ENCODE measurements at regions of chr10 and their contacts with region 1.

Region 1: DNA sequence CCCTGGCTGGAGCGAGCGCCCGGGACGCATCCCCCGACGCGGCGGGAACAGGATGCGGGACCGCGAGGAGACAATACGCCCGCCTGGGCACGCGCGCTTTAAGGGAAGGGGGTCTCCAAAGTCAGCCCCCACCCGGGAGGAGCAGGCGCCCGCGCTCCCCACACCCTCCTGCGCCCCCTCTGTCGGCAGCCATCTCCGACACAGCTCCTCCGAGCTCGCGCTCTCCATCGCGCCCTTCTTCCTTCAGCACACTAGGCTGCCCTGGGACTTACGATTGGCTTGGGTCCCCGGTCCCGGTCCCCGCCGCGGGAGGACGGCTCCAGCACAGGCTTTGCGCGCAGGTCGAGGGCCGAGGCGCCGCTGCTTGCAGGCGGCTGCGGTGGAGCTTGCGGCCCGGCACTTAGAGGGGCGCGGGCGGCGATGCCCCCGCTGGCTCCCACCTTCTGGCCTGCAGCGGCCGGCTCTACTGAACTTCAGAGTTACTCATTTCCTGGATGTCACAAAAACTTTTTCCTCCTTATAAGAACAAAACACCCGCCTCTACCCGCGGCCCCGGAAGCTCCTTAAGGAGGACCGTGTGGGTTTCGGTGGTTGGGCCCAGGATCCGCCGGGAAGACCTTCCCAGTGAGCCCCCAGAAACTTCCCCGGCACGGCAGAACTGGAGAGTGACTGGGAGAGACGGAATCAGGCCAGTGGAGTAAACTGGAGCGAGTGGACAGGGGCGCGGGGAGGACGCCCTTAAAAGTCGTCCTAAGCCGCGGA is at the start of gene ITPRIP:
- DNase-seq: peak; percentile 87
- H3K4me3 ChIP-seq: peak within 1 kb of the TSS; percentile 79
- H3K27ac ChIP-seq: peak within 1 kb of the TSS; percentile 84
- H3K4me1 ChIP-seq: peaks cover 60% of the 10 kb centered on the region
- CTCF ChIP-seq: peak; percentile 58
- total RNA-seq, gene ITPRIP: 3.3 and 6.0 TPM in 2 replicates

Region 2: DNA sequence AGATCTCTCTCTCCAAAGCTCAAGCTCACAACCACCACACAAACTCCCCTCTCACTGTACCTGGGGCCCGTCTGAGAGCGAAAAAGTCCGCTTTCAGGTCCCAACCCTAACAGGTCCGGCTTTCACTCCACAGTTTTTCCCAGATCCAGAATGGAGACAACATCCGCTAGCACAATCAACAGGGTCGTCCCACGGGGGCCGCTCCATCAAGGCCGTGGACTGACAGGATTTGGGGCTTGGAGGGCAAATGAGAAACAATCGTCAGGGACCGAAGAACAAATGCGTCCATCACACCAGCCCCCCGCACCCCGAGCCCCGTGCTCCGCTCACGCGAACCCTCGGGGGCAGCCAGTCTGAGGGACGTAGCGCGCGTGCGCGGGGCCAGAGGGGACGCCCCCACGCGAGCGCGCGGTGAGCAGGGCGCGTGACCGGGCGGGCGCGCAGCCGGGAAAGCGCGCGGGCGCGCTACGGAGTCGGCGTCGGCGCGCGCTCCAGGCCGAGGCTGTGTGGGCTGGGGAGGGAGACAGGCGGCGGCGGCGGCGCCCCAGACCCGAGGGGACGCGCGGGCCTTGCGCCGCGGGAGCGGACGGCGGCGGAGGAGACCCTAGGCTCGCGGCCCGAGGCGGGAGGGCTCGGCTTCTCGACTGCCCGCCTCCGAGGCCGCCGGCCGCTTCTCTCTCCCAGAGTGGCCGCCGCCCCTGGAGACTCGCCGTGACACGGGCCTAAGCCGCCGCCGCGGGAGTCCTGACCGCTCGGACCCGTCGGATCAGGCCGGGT is 371.3 kb before region 1 on chr10 and contains the start of gene SLK:
- CTCF ChIA-PET with region 1: no interaction called
- POLR2A ChIA-PET with region 1: interaction called, 3 read pairs
- intact Hi-C with region 1: loop called (anchors 5 kb)
- DNase-seq: peak; percentile 93
- H3K4me3 ChIP-seq: peak within 1 kb of the TSS; percentile 91
- H3K27ac ChIP-seq: peak within 1 kb of the TSS; percentile 49
- H3K4me1 ChIP-seq: peaks cover 30% of the 10 kb centered on the region
- CTCF ChIP-seq: no peak
- total RNA-seq, gene SLK: 19.0 and 19.9 TPM in 2 replicates

Region 3: DNA sequence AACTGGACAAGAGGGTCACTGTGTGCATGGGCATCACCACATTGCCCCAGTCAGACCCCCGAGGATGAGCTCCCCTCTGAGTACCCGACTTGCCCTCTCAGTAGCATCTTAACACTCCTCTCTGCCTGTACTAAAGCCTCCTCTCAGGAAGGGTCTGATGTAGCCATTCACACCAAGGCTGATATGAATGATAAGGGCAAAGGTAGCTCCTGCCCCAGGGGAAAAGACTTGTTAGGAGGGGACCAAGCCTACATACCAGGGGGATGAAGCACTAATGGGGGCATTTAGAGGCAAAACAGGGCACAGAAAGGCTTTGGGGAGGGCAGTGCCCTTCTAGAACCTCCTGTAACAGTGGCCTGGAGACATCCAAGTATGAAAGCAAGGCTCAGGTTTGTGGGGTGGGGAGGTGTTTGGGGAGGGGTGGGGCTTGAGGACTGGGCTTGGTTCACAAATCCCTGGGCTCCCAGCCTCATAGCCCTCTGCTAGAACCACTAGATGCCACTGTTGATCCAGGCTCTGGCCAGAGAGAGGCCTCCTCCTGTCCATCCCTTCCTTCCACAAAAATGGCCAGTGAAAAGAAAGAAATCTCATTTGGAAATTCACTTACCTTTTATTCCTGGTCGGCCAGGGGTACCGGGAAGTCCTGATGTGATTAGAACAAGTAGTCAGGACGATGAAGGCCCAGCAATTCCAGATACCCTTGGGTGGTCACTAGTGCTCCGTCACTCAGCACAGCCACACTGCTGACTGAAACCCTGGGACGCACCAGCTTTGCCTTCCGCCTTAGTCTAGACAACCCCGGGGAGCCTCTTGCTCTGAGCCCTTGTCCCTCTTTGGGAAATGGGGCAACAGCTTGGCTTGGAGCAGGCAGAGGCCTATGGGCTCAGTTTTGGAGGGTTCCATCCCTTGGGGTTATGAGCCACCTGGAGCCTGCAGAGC is 292.7 kb before region 1 on chr10:
- CTCF ChIA-PET with region 1: no interaction called
- POLR2A ChIA-PET with region 1: no interaction called
- intact Hi-C with region 1: no loop called
- DNase-seq: no peak
- H3K4me3 ChIP-seq: no peak overlapping the region
- H3K27ac ChIP-seq: no peak overlapping the region
- H3K4me1 ChIP-seq: no peaks in the 10 kb centered on the region
- CTCF ChIP-seq: 0 out of 2 replicates have a peak, but pooled peaks have one; percentile 36

Region 4: GRCh38 chr10:104268716-104269645 is 69.2 kb before region 1 on chr10 and contains the start of gene GSTO2:
- CTCF ChIA-PET with region 1: no interaction called
- POLR2A ChIA-PET with region 1: interaction called, 6 read pairs
- intact Hi-C with region 1: loop called (anchors 2 kb)
- DNase-seq: peak; percentile 99
- H3K4me3 ChIP-seq: peak within 1 kb of the TSS; percentile 88
- H3K27ac ChIP-seq: peak within 1 kb of the TSS; percentile 47
- H3K4me1 ChIP-seq: peaks cover 16% of the 10 kb centered on the region
- CTCF ChIP-seq: no peak
- total RNA-seq, gene GSTO2: 1.6 and 8.2 TPM in 2 replicates

Region 5: GRCh38 chr10:104306897-104307296 is 31.3 kb before region 1 on chr10:
- CTCF ChIA-PET with region 1: interaction called, 6 read pairs
- POLR2A ChIA-PET with region 1: interaction called, 6 read pairs
- intact Hi-C with region 1: loop called (anchors 1 kb)
- DNase-seq: no peak
- H3K4me3 ChIP-seq: no peak overlapping the region
- H3K27ac ChIP-seq: no peak overlapping the region
- H3K4me1 ChIP-seq: peaks cover 6% of the 10 kb centered on the region
- CTCF ChIP-seq: no peak

Region 6: DNA sequence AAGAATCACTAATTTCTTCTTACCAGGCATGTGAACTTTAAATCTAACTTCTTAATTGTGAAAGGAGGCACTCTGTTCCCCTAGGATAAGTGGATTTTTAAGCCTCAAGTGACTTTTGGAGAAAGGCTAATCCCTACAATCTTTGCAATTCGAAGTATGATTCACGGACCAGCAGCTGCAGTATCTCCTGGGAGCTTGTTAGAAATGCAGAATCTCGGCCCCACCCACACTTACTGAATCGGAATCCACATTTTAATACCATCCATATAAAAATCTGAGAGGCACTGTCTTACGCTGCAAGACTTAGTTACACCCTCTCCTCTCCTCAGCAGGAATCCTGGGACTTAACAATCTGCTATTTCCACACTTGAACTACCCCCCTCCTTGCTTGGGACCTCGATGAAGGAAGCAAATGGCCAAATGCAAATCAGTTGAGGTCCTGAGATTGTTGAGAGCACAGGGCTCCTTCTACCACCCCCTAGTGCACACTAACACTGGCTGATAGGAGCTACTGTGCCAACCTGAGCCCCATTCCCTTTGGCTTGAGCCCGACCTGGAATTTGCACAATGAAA is 20.9 kb before region 1 on chr10:
- CTCF ChIA-PET with region 1: interaction called, 8 read pairs
- POLR2A ChIA-PET with region 1: interaction called, 22 read pairs
- intact Hi-C with region 1: loop called (anchors 1 kb)
- DNase-seq: peak; percentile 35
- H3K4me3 ChIP-seq: peak overlapping the region; percentile 12
- H3K27ac ChIP-seq: peak overlapping the region; percentile 11
- H3K4me1 ChIP-seq: peaks cover 52% of the 10 kb centered on the region
- CTCF ChIP-seq: no peak; the same call in 1 of the 2 replicates

Region 7: DNA sequence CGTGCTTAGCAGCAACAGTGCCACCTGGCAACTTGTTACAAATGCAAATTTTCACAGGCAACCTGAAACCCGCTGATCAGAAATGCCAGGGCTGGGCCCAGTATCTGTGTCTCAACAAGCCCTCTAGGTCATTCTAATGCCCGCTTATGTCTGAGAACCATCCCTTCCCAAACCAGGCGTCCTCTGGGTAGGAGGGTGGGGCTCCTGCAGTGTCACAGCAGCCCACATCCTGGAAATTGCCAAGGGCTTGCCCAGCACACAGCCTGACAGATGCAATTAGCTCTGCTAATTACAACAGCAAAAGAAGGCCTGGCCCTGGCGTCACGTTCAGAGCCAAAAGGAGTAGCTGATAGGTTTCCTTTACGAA is 15.8 kb before region 1 on chr10:
- CTCF ChIA-PET with region 1: interaction called, 8 read pairs
- POLR2A ChIA-PET with region 1: interaction called, 22 read pairs
- intact Hi-C with region 1: loop called (anchors 1 kb)
- DNase-seq: peak; percentile 77
- H3K4me3 ChIP-seq: peak overlapping the region; percentile 19
- H3K27ac ChIP-seq: peak overlapping the region; percentile 70
- H3K4me1 ChIP-seq: peaks cover 73% of the 10 kb centered on the region
- CTCF ChIP-seq: no peak

Region 8: DNA sequence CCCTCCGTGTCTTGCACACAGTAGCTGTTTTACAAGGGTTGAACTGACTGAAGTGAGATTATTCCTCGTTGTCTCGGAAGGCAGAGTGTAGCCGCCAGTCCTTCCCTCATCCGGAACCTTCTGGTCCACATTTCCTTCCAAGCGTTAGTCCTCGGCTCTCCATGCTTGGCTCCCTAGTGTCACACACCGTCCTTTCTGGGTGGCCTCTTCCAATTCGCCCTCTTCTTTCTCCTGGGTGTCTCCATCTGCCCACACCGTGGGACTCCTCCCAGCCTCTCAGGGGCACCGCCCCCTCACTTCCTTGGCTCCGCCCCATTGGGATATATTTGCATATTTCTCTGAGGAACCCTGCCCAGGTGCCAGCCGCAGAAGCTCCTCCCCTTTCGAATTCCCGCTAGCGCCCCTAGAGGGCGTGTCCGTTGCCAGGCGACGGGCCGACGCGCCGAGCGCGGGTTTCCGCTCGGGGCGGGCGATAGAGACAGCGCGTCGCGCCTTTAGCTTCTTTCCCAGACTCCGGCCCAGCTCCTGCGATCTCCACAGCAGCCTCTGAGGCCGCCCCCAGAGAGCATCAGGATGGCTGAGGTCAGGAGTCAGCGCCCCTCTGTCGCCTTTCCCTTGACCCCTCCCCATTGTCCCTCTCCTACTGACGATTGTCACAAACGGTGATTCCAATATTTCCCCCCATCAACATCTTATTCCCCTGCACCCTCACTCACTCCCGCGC is 15.3 kb after region 1 on chr10 and contains the start of gene CFAP58:
- CTCF ChIA-PET with region 1: no interaction called
- POLR2A ChIA-PET with region 1: interaction called, 18 read pairs
- intact Hi-C with region 1: loop called (anchors 1 kb)
- DNase-seq: peak; percentile 87
- H3K4me3 ChIP-seq: peak within 1 kb of the TSS; percentile 68
- H3K27ac ChIP-seq: no peak within 1 kb of the TSS
- H3K4me1 ChIP-seq: peaks cover 33% of the 10 kb centered on the region
- CTCF ChIP-seq: peak; percentile 71
- total RNA-seq, gene CFAP58: 0.09 and 0.36 TPM in 2 replicates

Region 9: DNA sequence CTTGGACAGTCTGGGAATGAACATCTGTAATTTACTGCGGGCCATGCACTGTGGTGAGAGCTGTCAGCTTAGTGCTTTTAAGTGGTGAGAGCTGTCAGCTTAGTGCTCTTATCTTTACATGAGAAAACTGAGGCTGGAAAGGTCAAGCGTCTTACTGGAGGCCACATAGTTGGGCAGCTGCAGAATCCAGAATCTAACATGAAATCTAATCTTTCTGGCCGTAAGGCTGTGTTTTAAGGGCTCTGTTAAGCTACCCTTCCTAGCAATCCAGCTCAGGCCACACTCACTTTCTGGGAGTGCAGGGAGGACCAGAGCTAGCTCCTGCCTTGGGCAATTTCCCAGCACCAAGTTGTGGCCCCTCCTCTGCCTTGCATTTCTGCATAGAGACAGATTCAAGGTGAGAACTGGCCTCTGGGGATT is 373.2 kb after region 1 on chr10:
- CTCF ChIA-PET with region 1: no interaction called
- POLR2A ChIA-PET with region 1: no interaction called
- intact Hi-C with region 1: no loop called
- DNase-seq: no peak
- H3K4me3 ChIP-seq: no peak overlapping the region
- H3K27ac ChIP-seq: no peak overlapping the region
- H3K4me1 ChIP-seq: no peaks in the 10 kb centered on the region
- CTCF ChIP-seq: no peak

Region 10: GRCh38 chr10:104937572-104937971 is 599.4 kb after region 1 on chr10:
- CTCF ChIA-PET with region 1: no interaction called
- POLR2A ChIA-PET with region 1: no interaction called
- intact Hi-C with region 1: no loop called
- DNase-seq: no peak
- H3K4me3 ChIP-seq: no peak overlapping the region
- H3K27ac ChIP-seq: no peak overlapping the region
- H3K4me1 ChIP-seq: no peaks in the 10 kb centered on the region
- CTCF ChIP-seq: no peak